ENCODE measurements at regions of chr10 and their contacts with region 1.

Region 1: GRCh38 chr10:5889624-5890451 is at the starts of genes ANKRD16 and FBH1:
- DNase-seq: peak; percentile 99
- ATAC-seq: peak; percentile 94 to 96 (median 96)
- H3K4me3 ChIP-seq: peak within 1 kb of the TSS; percentile 93
- H3K27ac ChIP-seq: peak within 1 kb of the TSS; percentile 89
- H3K4me1 ChIP-seq: peaks cover 48% of the 10 kb centered on the region
- H3K27me3 ChIP-seq: no peaks in the 10 kb centered on the region
- CTCF ChIP-seq: no peak
- total RNA-seq, gene ANKRD16: 2.8 to 4.6 (median 3.2) TPM
- total RNA-seq, gene FBH1: 32.4 to 56.7 (median 39.9) TPM

Region 2: DNA sequence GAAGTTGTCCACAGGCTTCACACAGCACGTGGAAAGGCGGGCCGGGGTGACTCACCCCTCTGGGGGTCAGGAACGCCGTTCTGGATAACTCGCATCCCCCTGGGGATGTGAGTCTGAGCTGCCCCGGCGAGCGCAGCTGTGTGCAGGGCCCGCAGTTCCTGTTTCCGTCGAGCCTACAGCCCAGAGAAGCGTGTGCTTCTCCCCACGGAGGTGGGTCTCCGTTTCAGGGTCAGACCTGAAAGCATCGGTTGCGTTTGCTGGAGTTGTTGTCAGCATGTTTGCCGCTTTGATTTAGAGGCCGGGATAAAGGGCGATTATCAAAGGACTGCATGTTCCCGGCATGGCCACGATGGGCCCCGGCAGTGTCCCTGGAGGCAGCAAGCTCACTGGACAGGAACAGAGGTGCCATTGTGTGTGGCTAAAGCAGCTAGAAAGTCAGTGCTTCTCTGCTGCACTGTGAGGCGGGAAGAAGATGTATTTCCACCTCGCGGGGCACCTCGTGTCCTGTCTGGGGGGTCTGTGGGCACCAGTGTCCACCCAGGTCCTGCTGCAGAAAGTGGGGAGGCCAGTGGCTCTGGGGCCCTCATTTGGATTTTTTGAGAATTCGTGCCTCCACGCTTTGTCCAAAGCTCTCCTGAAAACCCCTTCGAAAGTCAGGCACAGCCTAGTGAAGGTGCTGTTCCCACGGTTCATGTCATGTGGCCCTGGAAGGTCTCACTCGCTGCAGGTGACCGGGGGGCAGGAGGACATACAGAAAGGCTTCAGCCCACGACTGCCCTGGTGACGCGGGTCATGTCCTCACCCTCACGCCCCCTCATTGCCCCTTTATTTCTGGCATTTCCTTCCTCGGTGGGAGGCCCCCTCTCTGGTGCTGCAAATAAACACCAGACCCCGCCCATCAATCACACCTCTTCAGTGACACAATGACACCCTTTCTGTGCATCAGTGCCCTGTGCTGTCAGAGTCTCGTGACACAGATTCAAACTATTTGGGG is 49.2 kb before region 1 on chr10:
- intact Hi-C with region 1: no loop called
- DNase-seq: peak; percentile 49 to 85
- ATAC-seq: peak; percentile 17 to 78 (median 60)
- H3K4me3 ChIP-seq: no peak overlapping the region
- H3K27ac ChIP-seq: no peak overlapping the region
- H3K4me1 ChIP-seq: no peaks in the 10 kb centered on the region
- H3K27me3 ChIP-seq: peaks cover 0 to 7% (median 0%) of the 10 kb centered on the region in 3 donors
- CTCF ChIP-seq: no peak

Region 3: GRCh38 chr10:5977471-5978229 is 87.8 kb after region 1 on chr10 and contains the start of gene IL15RA:
- intact Hi-C with region 1: loop called in 1 of 2 experiments (anchors 5 kb)
- DNase-seq: peak; percentile 80 to 88
- ATAC-seq: peak; percentile 84 to 87 (median 86)
- H3K4me3 ChIP-seq: peak within 1 kb of the TSS; percentile 89
- H3K27ac ChIP-seq: peak within 1 kb of the TSS; percentile 93
- H3K4me1 ChIP-seq: peaks cover 7% of the 10 kb centered on the region
- H3K27me3 ChIP-seq: no peaks in the 10 kb centered on the region
- CTCF ChIP-seq: peak; percentile 15
- total RNA-seq, gene IL15RA: 7.9 to 10.9 (median 9.5) TPM